ENCODE measurements at regions of chr16 and their contacts with region 1.

Region 1: DNA sequence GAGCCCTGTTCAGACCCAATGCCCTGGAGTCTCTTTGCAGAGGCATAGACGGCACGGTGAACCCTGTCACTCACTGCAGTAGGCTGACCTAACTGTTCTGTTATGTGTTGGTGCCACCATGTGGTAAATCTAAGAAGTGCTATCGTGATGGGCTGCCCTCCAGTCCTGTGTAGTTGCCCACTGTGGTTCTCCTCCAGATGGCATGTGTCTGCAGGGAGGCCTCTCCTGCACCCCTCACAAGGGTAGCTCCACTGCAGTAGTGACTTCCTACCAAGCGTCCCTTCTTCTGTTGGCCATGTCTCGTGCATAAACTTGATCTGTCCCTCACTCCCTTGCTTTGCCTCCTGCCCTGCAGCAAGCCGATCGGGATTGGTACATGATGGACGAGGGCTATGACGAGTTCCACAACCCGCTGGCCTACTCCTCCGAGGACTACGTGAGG is 5.8 kb downstream of the DHX38 start:
- DNase-seq: no peak
- ATAC-seq: peak; percentile 80
- H3K4me3 ChIP-seq: no peak overlapping the region
- H3K27ac ChIP-seq: no peak overlapping the region
- H3K4me1 ChIP-seq: peaks cover 0 to 4% of the 10 kb centered on the region in 2 donors
- H3K27me3 ChIP-seq: no peaks in the 10 kb centered on the region

Region 2: DNA sequence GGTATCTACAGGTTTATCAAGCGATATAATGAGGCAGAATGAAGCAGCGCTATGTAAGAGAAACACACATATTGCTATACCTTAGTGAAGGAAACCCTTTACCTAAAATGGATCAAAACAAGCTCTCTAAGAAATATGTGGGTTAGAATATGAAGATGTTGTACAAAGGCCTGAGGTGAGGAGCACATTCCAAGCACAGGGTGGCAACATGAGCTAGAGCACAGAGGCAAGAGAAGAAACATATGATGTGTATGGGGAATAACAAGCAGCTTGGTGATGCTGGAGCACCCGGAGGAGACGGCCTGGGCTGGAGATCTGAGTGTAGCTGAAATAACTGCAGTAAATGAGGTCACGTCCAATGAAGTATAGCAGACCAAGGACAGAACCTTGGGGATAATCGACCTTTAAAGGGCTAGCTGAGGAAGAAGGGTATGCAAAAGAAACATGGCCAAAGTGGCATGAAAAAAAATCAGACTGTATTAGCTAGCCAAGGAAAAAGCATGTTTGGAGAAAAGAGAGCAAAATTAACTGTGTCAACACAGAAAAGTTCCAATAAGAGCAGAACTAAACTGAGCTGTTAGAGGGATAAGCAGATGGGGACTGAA is 429.4 kb before region 1 on chr16:
- intact Hi-C with region 1: no loop called
- DNase-seq: no peak
- ATAC-seq: no peak
- H3K4me3 ChIP-seq: no peak overlapping the region
- H3K27ac ChIP-seq: no peak overlapping the region
- H3K4me1 ChIP-seq: no peaks in the 10 kb centered on the region
- H3K27me3 ChIP-seq: no peaks in the 10 kb centered on the region

Region 3: GRCh38 chr16:72008424-72009216 is 90.8 kb before region 1 on chr16 and contains the start of gene DHODH:
- intact Hi-C with region 1: loop called in 1 of 2 experiments (anchors 5 kb)
- DNase-seq: peak; percentile 99
- ATAC-seq: peak; percentile 100
- H3K4me3 ChIP-seq: peak within 1 kb of the TSS; percentile 80 to 81
- H3K27ac ChIP-seq: peak within 1 kb of the TSS in 1 of 2 donors; percentile 32
- H3K4me1 ChIP-seq: no peaks in the 10 kb centered on the region
- H3K27me3 ChIP-seq: no peaks in the 10 kb centered on the region
- total RNA-seq, gene DHODH: 4.9 to 5.0 TPM

Region 4: GRCh38 chr16:72021043-72021442 is 78.4 kb before region 1 on chr16:
- intact Hi-C with region 1: no loop called
- DNase-seq: no peak
- ATAC-seq: no peak
- H3K4me3 ChIP-seq: no peak overlapping the region
- H3K27ac ChIP-seq: no peak overlapping the region
- H3K4me1 ChIP-seq: no peaks in the 10 kb centered on the region
- H3K27me3 ChIP-seq: no peaks in the 10 kb centered on the region